ENCODE measurements at regions of chr18 and their contacts with region 1.

Region 1: DNA sequence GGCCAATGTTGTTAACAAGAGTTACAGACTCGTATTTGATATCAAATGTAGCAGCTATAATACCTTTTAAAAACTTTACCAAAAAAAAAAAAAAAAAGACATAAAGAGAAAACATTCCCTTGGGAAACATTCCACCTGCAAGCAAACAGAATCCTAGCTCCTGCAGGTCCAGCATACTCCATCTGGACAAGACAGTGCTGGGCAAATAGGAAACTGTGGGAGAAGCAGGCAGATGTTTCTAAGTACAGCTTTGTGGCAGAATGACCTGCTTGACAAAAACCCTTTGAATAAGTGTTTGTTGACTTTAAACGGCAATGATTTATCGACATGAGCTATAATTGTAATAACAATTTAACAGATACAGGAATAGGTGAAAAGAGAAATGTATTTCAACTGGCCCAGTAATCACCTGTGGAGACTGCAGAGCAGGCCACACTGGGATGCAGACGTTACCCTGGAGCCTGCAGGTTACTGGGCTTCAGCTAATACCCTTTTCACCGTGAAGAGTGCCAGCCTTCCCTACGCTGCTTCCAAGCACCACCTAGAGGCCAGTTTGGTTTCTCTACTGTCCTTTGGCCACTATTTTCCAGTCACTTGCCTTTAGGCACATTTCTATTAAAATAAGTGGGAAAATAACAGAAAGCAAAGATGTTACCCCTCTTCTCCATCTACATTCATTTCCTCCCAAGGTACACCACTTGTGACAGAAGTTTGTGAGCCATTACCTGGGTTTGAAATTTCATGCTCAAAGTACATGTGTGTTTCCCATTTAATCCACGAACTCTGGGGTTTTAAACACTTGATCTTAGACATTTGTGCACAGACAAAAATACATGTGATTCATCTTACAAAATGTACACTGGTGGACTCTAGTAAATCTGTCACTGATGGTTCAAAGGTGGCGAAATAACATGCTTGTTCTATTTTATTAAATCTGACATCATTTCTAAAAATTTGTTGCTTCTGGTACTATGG is 96.9 kb upstream of the ZNF397 start:
- DNase-seq: peak; percentile 74
- H3K4me3 Mint-ChIP-seq: no peak overlapping the region
- H3K27ac Mint-ChIP-seq: no peak overlapping the region
- H3K4me1 Mint-ChIP-seq: peaks cover 3% of the 10 kb centered on the region
- H3K27me3 Mint-ChIP-seq: no peaks in the 10 kb centered on the region

Region 2: DNA sequence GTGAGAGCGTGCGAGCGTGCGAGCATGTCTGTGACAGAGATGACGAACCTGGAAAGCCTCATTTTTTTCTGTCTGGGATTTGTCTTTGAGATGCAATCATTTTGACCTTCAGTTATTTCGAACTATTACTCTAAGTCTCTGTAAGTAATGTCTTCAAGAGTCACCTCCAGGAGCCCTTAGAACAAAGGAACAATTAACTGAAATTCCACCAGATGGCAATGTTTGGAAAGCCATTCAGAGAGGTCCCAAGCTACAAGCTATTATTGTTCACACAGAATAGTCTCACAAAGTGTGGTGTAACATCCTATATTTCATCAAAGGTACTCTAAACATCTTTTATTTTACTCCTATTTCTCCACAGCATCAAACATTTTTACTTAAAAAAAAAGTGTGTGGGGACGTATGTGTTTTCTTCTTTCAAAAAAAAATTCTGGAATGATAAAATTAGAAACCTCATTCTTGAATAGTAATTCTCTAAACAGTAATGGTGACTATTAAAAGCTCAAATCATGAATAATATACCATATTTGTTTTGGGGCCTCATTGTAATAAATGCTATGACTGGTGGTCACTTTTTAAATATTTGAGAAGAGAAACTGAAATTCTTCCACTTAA is 137.8 kb before region 1 on chr18:
- intact Hi-C with region 1: loop called (anchors 1 kb)
- DNase-seq: peak; percentile 80
- H3K4me3 Mint-ChIP-seq: no peak overlapping the region
- H3K27ac Mint-ChIP-seq: no peak overlapping the region
- H3K4me1 Mint-ChIP-seq: no peaks in the 10 kb centered on the region
- H3K27me3 Mint-ChIP-seq: peaks cover 6% of the 10 kb centered on the region

Region 3: DNA sequence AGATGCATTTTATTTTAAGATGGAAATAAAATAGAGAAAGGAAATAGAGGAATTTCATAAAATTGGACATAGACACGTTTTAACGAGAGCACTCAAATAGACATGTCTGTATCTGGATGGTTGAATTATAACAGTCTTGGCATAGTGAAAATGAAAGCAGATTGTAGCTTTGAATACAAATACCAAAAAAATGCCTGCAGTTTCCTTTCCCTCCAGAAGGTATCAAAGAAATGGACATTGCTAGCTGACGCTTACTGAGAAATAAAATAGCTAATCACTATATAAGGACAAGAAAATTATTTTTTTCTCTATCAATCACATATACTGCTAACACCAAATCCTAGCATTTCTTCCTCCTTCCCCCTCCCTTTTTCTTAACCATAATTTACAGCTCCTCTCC is 114.1 kb before region 1 on chr18:
- intact Hi-C with region 1: loop called (anchors 5 kb)
- DNase-seq: no peak
- H3K4me3 Mint-ChIP-seq: peak overlapping the region; percentile 89
- H3K27ac Mint-ChIP-seq: peak overlapping the region; percentile 97
- H3K4me1 Mint-ChIP-seq: peaks cover 40% of the 10 kb centered on the region
- H3K27me3 Mint-ChIP-seq: no peaks in the 10 kb centered on the region

Region 4: DNA sequence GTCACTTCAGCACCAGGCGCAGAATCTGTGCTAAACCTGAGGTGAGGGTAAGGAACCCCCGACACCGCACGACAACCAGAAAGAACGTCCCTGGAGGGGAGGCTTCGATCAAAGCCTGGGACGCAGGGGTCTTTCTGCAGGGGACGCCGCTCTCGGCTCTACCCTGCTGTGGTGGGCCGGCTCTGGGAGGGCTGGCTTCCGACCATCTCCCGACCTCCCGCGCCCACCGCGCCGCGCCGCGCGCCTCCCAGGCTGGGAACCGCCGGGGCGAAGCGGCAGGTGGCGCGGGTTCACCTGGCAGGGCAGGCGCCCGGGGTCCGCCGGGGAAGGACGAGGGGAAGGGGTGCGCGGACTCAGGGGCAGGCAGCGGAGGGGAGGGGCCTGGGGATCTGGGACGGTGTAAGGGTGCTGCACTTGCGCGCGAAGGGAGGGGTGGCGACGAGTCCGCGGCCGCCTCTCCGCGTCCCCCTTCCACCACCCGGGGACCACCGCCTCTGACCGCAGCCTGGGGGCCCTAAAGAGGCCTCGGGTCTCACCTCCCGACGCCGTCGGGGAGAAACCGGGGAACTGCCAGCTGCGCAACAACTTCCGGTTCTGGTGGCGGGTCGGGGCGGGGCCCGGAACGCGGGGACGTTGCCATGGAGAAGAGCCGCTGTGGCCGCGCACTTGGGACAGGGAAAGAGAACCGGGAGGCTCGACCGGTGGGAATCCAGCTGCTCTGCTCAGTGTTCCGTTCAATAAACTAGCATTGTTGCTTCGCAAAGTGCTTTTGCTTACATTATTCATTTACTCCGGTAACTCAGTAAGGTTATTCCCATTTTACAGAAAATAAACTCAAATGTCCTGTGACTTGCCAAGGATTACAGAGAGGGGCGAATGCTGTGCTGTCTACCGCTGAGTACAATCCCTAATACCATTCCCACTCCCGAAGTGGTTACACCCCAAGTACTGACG is 233.1 kb after region 1 on chr18 and contains the start of gene ZNF396:
- intact Hi-C with region 1: no loop called
- DNase-seq: peak; percentile 92
- H3K4me3 Mint-ChIP-seq: peak within 1 kb of the TSS; percentile 75
- H3K27ac Mint-ChIP-seq: peak within 1 kb of the TSS; percentile 41
- H3K4me1 Mint-ChIP-seq: peaks cover 2% of the 10 kb centered on the region
- H3K27me3 Mint-ChIP-seq: peaks cover 26% of the 10 kb centered on the region
- total RNA-seq, gene ZNF396: 0.19 and 0.26 TPM in 2 replicates